ENCODE measurements at regions of chr20 and their contacts with region 1.

Region 1: DNA sequence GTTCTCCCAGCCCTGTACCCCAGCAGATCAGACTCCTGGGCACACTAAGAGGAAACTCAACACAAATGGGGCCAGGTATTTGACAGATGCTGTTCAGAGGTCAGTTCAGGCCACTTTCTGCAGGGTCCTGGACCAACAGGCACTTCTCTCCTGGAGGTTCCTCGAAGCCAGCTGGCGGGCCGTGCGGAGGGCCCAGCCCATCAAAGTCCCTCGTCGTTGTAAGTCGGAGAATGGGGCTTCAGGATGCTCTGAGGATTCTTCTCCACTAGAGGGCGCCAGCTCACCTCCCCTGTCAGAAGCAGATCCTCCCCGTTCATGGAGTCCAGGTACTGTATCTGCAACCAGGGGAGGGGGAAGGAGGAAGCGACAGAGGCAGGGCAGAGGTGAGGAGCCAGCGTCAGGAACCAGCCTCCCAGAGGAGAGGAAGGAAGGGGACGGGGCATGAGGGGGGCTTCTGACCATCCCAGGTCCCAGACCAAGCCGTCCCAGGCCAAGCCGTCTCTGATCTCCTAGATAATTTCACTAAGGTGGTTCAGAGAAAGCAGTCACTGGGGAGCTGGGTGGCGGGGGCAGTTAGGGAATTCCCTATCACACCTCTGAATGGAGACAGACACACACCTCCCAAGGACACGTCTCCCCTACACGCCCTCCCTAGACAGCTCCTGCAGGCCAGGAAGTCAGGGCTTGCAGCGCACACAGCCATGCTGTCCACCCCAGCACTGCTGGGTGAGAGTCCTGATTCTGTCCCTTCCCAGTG is 11.7 kb upstream of the FAM83C start:
- DNase-seq: peak; percentile 92
- ATAC-seq: peak; percentile 57
- H3K4me3 Mint-ChIP-seq: no peak overlapping the region
- H3K27ac Mint-ChIP-seq: peak overlapping the region; percentile 93
- H3K4me1 Mint-ChIP-seq: peaks cover 59% of the 10 kb centered on the region
- H3K27me3 Mint-ChIP-seq: no peaks in the 10 kb centered on the region

Region 2: DNA sequence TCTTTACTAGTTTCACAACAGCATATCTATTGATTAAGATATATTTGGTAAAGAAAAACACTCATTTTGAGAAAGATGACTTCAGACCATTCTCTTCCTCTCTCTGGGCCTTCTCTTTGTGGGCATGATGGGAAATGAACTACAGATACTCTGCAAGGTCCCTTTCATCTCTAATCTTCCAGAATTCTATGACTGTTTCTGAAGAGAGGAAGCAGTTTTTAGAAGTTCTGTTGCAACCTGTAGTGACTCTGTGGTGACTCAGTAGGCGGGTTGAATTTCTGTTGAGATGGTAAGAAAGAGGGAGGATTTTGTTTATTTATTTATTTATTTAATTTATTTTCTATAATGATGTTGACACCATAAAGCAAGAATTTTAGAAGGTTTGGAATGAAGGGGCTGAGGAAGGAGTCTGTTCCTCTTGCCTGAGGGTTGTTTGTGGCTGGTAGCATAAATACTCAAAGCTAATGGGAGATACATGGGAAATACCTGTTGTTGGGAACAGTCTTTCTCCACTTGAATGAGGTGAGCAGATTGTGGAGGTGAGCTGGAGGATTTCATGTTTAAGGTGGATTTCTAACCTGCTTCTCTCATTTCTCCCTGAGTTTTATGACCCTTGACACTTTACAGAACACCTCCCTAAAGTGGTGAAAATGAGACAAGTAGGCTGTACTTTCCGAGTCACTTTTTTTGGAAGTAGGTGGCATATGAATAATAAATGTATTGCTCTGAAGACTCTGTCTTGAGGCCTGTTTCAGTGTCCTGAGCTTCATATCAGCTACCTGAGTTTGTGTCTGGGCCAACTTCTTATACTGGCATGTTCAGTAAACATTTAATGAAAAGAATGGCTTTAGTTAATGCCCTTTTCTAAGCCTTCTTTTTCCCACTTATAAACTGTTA is 412.5 kb before region 1 on chr20:
- CTCF ChIA-PET with region 1: no interaction called
- POLR2A ChIA-PET with region 1: no interaction called
- intact Hi-C with region 1: loop called in 1 of 2 experiments (anchors 1 kb)
- DNase-seq: peak; percentile 64
- ATAC-seq: peak; percentile 97
- H3K4me3 Mint-ChIP-seq: peak overlapping the region; percentile 16
- H3K27ac Mint-ChIP-seq: peak overlapping the region; percentile 78
- H3K4me1 Mint-ChIP-seq: peaks cover 42% of the 10 kb centered on the region
- H3K27me3 Mint-ChIP-seq: no peaks in the 10 kb centered on the region

Region 3: GRCh38 chr20:35248641-35249475 is 55.1 kb before region 1 on chr20:
- CTCF ChIA-PET with region 1: no interaction called
- POLR2A ChIA-PET with region 1: no interaction called
- intact Hi-C with region 1: no loop called
- DNase-seq: no peak
- ATAC-seq: no peak
- H3K4me3 Mint-ChIP-seq: no peak overlapping the region
- H3K27ac Mint-ChIP-seq: no peak overlapping the region
- H3K4me1 Mint-ChIP-seq: peaks cover 13% of the 10 kb centered on the region
- H3K27me3 Mint-ChIP-seq: no peaks in the 10 kb centered on the region

Region 4: DNA sequence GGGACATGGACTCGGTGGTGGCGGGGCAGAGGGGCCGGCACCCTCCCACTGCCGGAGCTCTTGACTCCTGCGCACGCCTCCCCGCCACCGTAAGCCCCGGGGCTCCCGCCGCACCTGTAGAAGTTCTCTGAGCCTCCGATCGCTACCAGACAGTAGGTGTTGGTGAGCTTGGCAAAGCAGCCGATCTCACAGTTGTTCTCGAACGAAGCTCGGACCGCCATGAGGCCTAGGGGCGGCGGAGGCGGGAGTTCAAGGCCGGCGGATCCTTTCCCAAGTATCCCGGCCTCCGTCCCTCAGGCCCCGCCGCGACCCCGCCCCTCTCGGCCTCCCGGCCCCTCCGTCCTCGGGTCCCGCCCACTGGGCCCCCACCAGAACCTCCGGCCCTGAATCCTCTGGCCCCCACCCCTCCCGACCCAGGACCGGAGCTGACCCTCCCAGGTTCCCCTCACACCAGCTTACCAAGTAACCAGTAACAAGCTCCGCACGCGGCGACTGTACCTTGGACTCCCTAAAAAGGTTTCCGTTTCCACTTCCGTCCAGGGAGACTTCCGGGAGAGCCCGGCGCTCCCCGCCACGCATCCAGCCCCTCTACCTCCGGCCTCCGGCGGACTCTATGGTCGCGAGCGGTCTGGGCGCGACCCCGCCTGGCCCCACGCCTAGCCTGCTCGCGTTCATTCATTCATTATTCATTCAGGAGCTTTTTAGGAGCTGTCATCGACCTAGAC is 19.5 kb before region 1 on chr20 and contains the start of gene EIF6:
- CTCF ChIA-PET with region 1: interaction called, 7 read pairs
- POLR2A ChIA-PET with region 1: interaction called, 5 read pairs
- intact Hi-C with region 1: loop called (anchors 1 to 2 kb)
- DNase-seq: peak; percentile 88
- ATAC-seq: peak; percentile 85
- H3K4me3 Mint-ChIP-seq: peak within 1 kb of the TSS; percentile 81
- H3K27ac Mint-ChIP-seq: peak within 1 kb of the TSS; percentile 91
- H3K4me1 Mint-ChIP-seq: peaks cover 23% of the 10 kb centered on the region
- H3K27me3 Mint-ChIP-seq: no peaks in the 10 kb centered on the region
- total RNA-seq, gene EIF6: 110 to 124 TPM

Region 5: DNA sequence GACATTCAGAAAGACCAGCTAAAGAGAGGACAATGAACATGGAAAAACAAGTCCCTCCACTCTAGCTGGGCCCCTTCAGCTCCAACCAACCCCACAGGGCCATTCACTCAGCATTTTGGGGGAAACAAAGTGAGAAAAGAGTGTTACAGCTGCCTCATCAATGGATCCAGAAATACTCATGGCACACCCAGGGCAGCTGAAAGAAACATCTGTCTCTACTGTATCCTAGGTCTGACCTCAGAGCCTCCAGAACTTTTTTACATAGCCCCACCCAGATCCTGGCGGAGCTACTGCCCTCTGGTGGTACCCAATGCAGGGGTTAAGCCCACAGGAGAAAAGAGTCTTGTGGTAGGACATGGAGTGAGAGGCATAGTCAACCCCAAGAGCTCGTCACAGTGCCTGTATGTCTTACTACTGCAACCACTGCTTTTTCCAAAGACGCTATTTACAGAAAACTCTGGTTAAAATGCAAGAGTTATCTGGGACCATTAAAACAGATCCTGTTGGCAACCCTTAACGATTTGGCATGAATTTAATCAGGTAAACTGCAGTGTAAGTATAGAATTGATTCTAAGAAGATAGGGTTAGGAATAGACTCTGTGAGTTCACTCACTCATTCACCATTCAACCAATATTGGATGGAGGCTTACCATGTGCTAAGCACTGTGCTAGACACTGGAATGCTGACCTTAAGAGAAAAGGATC is 25.7 kb after region 1 on chr20:
- CTCF ChIA-PET with region 1: interaction called, 109 read pairs
- POLR2A ChIA-PET with region 1: interaction called, 3 read pairs
- intact Hi-C with region 1: loop called (anchors 1 kb)
- DNase-seq: peak; percentile 83
- ATAC-seq: peak; percentile 82
- H3K4me3 Mint-ChIP-seq: no peak overlapping the region
- H3K27ac Mint-ChIP-seq: peak overlapping the region; percentile 80
- H3K4me1 Mint-ChIP-seq: peaks cover 52% of the 10 kb centered on the region
- H3K27me3 Mint-ChIP-seq: no peaks in the 10 kb centered on the region

Region 6: DNA sequence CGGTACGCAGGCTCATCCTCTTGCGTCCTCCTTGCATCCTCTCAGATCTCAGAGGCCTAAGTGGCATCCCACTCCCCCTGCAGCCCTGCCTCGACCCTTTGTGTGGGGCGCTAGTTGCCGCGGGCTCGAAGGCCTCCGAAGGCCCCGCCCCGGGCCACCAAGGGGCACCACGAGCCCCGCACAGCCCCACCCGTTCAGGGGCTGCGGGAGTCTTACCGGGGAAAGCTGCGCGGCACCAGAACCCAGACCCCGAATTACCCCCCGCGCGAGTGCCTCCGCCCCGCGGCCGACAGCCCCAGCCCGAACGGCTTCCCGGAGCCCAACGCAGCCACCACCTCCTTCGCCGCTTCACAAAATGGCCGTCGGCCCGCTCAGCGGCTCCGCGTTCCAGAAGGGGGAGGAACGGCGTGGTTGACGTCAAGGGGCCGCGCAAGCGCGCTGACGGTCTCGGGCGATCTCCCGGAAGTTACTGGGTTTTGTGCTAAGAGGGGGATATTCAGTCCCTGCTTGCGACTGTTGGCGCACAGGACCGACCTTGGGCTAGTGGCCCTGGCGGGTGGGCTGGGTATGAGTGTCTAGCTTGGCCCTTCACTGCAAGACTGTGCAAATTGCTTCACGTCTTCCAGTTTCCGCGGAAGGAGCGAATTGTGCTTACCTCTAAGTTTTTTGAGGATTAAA is 360.8 kb after region 1 on chr20 and contains the starts of genes CPNE1 and RBM12:
- CTCF ChIA-PET with region 1: no interaction called
- POLR2A ChIA-PET with region 1: no interaction called
- intact Hi-C with region 1: loop called in 1 of 2 experiments (anchors 5 kb)
- DNase-seq: peak; percentile 96
- ATAC-seq: peak; percentile 68
- H3K4me3 Mint-ChIP-seq: peak within 1 kb of the TSS; percentile 80
- H3K27ac Mint-ChIP-seq: peak within 1 kb of the TSS; percentile 100
- H3K4me1 Mint-ChIP-seq: peaks cover 36% of the 10 kb centered on the region
- H3K27me3 Mint-ChIP-seq: no peaks in the 10 kb centered on the region
- total RNA-seq, gene CPNE1: 249 to 258 TPM
- total RNA-seq, gene RBM12: 122 to 148 TPM